H1 (cell line): ENCODE measurements at regions of chr7 and their contacts with region 1.

Region 1: DNA sequence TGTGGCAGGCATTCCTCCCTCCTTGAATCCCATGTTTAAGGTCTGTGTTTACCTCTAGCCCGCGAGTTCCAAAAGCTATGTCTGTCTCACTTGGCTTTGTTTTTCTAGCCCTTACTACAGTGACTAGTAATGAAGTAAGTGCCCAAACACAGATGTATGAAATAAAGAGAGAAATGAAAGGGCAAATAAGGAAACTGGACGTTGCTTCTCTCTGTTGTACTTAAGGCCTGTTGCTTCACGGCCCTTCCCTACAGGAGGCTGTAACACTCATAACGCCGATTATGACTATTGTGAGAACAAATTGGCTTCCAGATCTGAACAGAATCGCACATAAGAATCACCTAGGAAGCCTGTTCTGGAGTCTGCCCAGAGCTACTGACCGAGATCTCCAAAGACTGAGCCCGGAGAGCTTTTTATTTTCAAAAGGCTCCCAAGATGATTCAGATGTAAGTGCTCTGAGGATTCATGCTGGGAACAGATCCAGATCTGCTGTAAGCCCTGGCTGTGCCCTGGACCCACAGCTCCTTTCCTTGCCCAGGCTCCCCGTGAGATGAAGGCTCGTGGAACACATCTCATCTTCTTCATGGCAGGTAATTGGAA is 432.6 kb downstream of the SDK1 start:
- DNase-seq: no peak
- H3K4me3 ChIP-seq: no peak overlapping the region
- H3K27ac ChIP-seq: no peak overlapping the region
- H3K4me1 ChIP-seq: no peaks in the 10 kb centered on the region
- H3K27me3 ChIP-seq: no peaks in the 10 kb centered on the region
- CTCF ChIP-seq: no peak
- EP300 ChIP-seq: no peak
- POLR2A ChIP-seq: no peak
- RAD21 ChIP-seq: no peak

Region 2: DNA sequence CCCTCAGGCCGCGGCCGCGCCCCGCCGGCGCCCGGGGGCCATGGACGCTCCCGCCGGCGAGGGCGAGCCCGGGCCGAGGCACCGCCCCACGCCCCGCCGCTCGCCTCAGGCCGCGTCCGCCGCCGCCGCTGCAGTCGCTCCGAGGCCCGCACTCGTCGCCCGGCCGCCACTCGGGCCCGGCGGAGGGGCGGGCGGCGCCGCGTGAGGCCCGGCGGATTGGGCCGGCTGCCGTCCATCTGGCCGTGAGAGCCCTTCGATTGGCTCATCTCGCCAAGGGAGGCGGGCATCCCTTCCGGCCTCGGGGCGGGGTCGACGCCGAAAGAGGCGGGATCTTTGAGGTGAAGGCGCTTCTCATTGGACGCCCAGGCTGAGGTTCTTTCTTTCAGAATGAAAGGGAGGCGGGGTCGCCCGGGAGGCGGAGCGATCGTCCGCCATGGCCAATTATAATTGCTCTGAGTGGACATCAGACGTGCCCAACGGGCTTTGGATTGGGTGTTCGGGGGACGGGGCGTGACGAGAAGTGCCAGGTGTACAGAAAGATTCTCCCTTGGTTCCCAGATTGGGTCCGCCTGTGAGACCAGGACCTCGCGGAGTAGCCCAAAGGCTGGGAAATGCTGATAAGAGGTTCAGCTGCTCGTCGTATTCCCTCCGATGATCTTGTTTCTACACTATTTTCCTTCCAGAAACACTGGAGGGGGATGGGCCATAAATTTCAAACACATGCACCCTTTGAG is 889.3 kb before region 1 on chr7 and contains the start of gene GNA12:
- CTCF ChIA-PET with region 1: no interaction called
- POLR2A ChIA-PET with region 1: no interaction called
- DNase-seq: peak; percentile 94 to 98
- H3K4me3 ChIP-seq: peak within 1 kb of the TSS; percentile 60 to 88 (median 74)
- H3K27ac ChIP-seq: peak within 1 kb of the TSS; percentile 53; the same call in 1 of the 2 replicates
- H3K4me1 ChIP-seq: peaks cover 3 to 11% (median 6%) of the 10 kb centered on the region in 4 experiments; a peak in 6 of 7 replicates
- H3K27me3 ChIP-seq: no peaks in the 10 kb centered on the region
- CTCF ChIP-seq: no peak
- EP300 ChIP-seq: no peak
- POLR2A ChIP-seq: peak; percentile 37 to 63
- RAD21 ChIP-seq: no peak
- total RNA-seq, gene GNA12: 95.6 and 96.5 TPM in 2 replicates

Region 3: GRCh38 chr7:3710122-3710918 is 23.3 kb before region 1 on chr7:
- CTCF ChIA-PET with region 1: no interaction called
- POLR2A ChIA-PET with region 1: no interaction called
- DNase-seq: no peak
- H3K4me3 ChIP-seq: no peak overlapping the region
- H3K27ac ChIP-seq: no peak overlapping the region
- H3K4me1 ChIP-seq: no peaks in the 10 kb centered on the region
- H3K27me3 ChIP-seq: no peaks in the 10 kb centered on the region
- CTCF ChIP-seq: no peak
- EP300 ChIP-seq: no peak
- POLR2A ChIP-seq: no peak
- RAD21 ChIP-seq: no peak

Region 4: GRCh38 chr7:3722396-3722922 is 11.2 kb before region 1 on chr7:
- CTCF ChIA-PET with region 1: interaction called, 10 read pairs
- POLR2A ChIA-PET with region 1: no interaction called
- DNase-seq: peak; percentile 78 to 81
- H3K4me3 ChIP-seq: peak overlapping the region in 1 of 4 experiments; percentile 14; a peak in 1 of 8 replicates
- H3K27ac ChIP-seq: no peak overlapping the region
- H3K4me1 ChIP-seq: peaks cover 0 to 6% (median 5%) of the 10 kb centered on the region in 4 experiments; a peak in 6 of 7 replicates
- H3K27me3 ChIP-seq: no peaks in the 10 kb centered on the region
- CTCF ChIP-seq: peak; percentile 73 to 79 (median 75)
- EP300 ChIP-seq: no peak
- POLR2A ChIP-seq: no peak
- RAD21 ChIP-seq: peak; percentile 60 to 74